ENCODE measurements at regions of chr2 and their contacts with region 1.

Region 1: GRCh38 chr2:75466708-75467311 is 93.9 kb downstream of the EVA1A start:
- DNase-seq: no peak
- H3K4me3 ChIP-seq: no peak overlapping the region
- CTCF ChIP-seq: peak; percentile 44

Region 2: DNA sequence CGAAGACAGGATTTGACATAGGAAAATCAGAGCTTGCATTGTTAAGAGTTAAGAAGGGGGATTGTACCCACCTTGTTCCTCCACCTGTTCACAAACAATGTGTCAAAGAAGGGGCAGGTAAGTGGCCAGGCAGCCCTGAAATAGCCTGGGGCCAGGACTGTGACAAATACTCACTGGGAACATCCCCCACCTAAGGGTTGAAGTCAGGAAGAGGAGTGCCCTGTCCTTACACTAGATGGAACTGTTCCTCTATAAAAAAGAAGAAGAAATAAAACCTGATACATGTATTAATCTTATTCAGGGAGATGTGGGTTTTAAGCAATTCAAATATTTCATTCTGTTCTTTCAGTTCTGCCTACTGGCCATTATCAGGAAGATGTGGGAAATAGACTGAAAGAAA is 309.4 kb before region 1 on chr2:
- CTCF ChIA-PET with region 1: interaction called, 12 read pairs
- POLR2A ChIA-PET with region 1: no interaction called
- DNase-seq: no peak
- H3K4me3 ChIP-seq: no peak overlapping the region
- CTCF ChIP-seq: peak; percentile 6

Region 3: DNA sequence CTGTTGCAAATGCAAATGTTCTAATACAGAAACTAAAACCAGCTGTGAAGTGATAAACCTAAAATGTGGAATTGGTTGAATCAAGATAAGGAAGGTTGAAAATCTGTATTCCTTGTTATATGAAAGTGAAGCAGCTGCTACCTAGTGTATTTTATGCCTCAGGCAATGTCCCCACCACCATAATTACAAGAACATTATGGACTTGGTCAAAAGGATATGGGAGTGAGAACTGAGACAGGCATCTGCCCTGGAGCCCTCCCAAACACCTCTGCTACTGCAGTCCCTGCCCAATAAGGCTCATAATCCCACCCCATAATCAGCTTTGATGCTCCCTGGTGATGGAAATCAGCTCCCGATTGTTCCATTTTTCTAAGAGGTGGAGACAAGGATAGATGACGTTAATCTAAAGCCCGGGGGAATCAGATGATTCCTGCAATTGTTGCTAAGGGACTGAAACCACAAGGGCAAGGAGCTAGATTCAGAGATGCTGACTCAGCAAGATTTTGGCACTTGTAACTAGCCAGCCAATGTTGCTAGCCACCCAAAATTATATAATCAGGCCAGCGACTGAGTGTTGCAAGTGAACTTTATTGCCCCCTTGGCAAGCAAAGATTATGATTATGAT is 24.4 kb after region 1 on chr2:
- CTCF ChIA-PET with region 1: interaction called, 166 read pairs
- POLR2A ChIA-PET with region 1: no interaction called
- DNase-seq: no peak
- H3K4me3 ChIP-seq: no peak overlapping the region
- CTCF ChIP-seq: no peak

Region 4: DNA sequence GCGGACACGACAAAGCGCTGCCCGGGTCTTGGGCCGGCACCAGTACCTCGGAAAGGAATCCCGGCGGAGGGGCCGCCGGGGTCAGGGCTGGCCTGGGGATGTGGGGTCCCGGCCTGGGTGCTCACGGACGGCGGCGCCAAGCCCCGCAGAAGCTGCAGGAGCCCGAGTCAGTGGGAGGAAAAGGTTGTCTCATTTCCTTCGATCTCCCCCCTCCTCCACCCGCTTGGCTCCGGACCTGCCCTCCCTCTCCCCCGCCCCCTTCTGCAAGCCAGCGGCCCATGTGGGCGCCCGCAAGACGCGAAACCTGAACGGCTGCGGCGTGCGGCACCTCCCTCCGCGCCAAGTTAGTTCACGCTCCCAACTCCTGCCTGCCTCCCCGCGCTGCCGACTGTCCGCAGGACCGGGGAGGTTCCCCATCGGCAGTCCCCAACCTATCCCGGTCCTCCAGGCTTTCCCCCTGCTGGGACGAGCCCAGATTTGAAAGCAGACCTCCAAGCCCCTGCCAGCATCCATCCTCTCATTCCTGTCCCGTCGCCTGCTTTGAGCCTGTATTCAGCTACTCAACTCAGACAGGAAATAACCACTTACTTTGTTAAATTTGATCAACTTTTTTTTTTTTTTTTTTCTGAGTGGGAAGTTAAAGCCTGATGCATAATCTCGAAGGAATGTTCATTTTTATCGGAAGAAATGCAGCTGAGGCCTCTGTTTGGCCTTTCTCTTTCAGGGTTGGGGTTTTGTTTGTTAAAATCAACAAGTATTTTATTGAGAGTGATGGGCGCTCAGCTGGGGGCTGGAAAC is 94.2 kb after region 1 on chr2 and contains the start of gene EVA1A:
- CTCF ChIA-PET with region 1: interaction called, 39 read pairs
- POLR2A ChIA-PET with region 1: no interaction called
- DNase-seq: no peak
- H3K4me3 ChIP-seq: peak within 1 kb of the TSS; percentile 83
- CTCF ChIP-seq: no peak

Region 5: DNA sequence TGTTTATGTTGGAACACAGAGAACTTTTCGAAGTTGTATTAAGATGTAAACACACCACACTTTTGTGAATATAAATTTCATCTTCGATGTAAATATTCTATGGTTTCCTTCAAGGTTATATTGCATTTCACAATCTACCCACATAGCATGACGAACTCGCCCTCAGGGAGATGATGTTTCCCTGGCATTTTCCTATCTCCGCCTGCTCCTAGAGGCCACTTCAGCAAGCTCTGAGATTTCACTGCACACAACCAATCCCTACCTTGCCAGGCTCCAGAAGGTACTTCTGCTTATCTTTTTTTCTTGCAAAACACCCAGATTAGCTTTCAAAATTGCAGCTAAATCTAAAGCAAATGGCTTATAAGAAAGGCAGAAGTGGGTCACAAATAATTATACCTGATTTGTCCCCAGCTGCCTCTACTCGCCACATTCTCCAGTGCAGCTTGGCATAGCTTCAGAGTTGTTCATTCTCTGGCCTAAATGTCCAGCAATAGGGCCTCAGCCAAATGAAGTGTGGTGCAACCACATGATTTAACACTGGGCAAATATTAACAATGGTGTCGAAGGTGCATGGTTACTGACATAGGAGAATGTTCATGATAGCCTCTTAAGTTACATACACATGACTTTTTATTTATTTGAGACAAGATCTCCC is 147.4 kb after region 1 on chr2:
- CTCF ChIA-PET with region 1: interaction called, 379 read pairs
- POLR2A ChIA-PET with region 1: no interaction called
- DNase-seq: no peak
- H3K4me3 ChIP-seq: no peak overlapping the region
- CTCF ChIP-seq: no peak

Region 6: GRCh38 chr2:75640621-75641121 is 173.9 kb after region 1 on chr2:
- CTCF ChIA-PET with region 1: interaction called, 452 read pairs
- POLR2A ChIA-PET with region 1: no interaction called
- DNase-seq: no peak
- H3K4me3 ChIP-seq: no peak overlapping the region
- CTCF ChIP-seq: peak; percentile 97